ENCODE measurements at regions of chrX and their contacts with region 1.

Region 1: GRCh38 chrX:4547213-4547836 is 833.9 kb upstream of the PRKX start:
- DNase-seq: peak; percentile 46
- H3K4me3 ChIP-seq: no peak overlapping the region
- H3K27ac ChIP-seq: no peak overlapping the region
- H3K4me1 ChIP-seq: no peaks in the 10 kb centered on the region
- CTCF ChIP-seq: peak; percentile 81

Region 2: DNA sequence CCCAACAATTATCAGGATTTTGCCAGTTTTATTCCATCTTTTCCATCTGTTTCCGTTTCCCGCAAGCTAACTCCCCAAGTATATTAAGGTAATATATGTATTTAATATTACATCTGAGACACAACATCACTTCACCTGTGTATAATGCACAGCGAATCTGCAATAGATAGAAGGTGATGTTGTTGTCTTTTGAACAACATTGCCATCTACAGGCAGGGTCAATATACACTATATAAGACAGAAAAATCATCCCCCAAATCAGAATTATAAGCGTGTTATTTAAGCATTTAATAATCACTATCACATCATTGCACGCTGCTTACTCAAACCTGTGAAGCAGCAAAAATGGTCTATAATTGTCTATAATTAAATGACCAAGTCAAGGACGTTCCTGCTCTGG is 565.8 kb after region 1 on chrX:
- CTCF ChIA-PET with region 1: no interaction called
- POLR2A ChIA-PET with region 1: no interaction called
- intact Hi-C with region 1: loop called (anchors 2 kb)
- DNase-seq: peak; percentile 52
- H3K4me3 ChIP-seq: no peak overlapping the region
- H3K27ac ChIP-seq: no peak overlapping the region
- H3K4me1 ChIP-seq: no peaks in the 10 kb centered on the region
- CTCF ChIP-seq: peak; percentile 76

Region 3: DNA sequence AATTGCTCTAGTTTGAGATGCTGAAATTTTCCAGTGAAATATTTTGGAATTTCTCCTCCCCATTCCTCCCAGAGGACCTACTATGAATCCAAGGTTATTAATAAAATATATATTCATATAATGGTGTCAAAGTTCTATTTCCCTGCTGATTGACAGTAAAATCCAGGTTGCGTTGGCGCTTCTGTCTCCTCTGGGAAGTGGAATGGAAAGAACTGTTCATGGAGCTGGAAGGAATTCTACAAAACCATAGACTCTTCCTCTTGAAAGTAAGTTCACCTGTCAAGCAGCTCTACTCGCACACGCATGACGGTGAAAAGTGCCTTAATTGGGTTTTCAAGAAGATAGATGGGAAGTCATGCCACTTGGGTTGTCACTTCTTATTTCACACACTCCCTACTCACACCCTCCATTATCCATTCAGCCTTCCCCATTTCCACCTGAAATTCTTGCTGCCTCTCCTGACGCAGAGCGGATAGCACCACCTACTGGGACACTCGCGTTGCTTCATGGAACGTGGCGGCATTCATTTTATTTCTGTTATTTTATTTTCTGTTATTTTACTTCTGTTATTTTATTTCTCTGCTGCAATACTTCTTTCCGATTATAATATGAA is 1329.8 kb after region 1 on chrX:
- CTCF ChIA-PET with region 1: no interaction called
- POLR2A ChIA-PET with region 1: no interaction called
- intact Hi-C with region 1: loop called (anchors 5 kb)
- DNase-seq: peak; percentile 17
- H3K4me3 ChIP-seq: no peak overlapping the region
- H3K27ac ChIP-seq: no peak overlapping the region
- H3K4me1 ChIP-seq: no peaks in the 10 kb centered on the region
- CTCF ChIP-seq: peak; percentile 70